Activated CD4-positive, alpha-beta memory T cell treated with anti-CD3 and anti-CD28 coated beads, Interleukin-2, amount 10 ng/mL, durations not matched to agents 7 days and 5 days (primary cell): ENCODE measurements at regions of chr17 and their contacts with region 1.

Region 1: GRCh38 chr17:72556944-72557826 is 436.4 kb downstream of the SOX9 start:
- DNase-seq: peak; percentile 77
- H3K4me3 Mint-ChIP-seq: no peak overlapping the region
- H3K27ac Mint-ChIP-seq: no peak overlapping the region
- H3K4me1 Mint-ChIP-seq: peaks cover 4% of the 10 kb centered on the region
- H3K27me3 Mint-ChIP-seq: no peaks in the 10 kb centered on the region

Region 2: DNA sequence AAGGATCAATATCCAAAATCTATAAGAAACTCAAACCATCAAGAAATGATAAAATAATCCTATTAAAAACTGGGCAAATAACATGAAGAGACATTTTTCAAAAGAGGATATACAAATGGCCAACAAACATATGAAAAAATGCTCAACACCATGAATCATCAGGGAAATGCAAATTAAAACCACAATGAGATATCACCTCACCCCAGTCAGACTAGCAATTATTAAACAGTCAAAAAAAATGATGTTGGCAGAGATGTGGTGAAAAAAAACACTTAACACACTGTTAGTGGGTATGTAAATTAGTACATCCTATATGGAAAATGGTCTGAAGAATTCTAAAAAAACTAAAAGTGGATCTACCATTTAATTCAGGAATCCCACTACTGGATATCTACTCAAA is 815.3 kb before region 1 on chr17:
- CTCF ChIA-PET with region 1: no interaction called
- POLR2A ChIA-PET with region 1: no interaction called
- DNase-seq: no peak
- H3K4me3 Mint-ChIP-seq: no peak overlapping the region
- H3K27ac Mint-ChIP-seq: no peak overlapping the region
- H3K4me1 Mint-ChIP-seq: no peaks in the 10 kb centered on the region
- H3K27me3 Mint-ChIP-seq: no peaks in the 10 kb centered on the region

Region 3: GRCh38 chr17:72592242-72592966 is 35.2 kb after region 1 on chr17:
- CTCF ChIA-PET with region 1: interaction called, 19 read pairs
- POLR2A ChIA-PET with region 1: interaction called, 7 read pairs
- DNase-seq: peak; percentile 85
- H3K4me3 Mint-ChIP-seq: peak overlapping the region; percentile 92
- H3K27ac Mint-ChIP-seq: peak overlapping the region; percentile 50
- H3K4me1 Mint-ChIP-seq: peaks cover 43% of the 10 kb centered on the region
- H3K27me3 Mint-ChIP-seq: peaks cover 43% of the 10 kb centered on the region

Region 4: GRCh38 chr17:72985881-72986720 is 428.9 kb after region 1 on chr17:
- CTCF ChIA-PET with region 1: interaction called, 17 read pairs
- POLR2A ChIA-PET with region 1: no interaction called
- DNase-seq: peak; percentile 62
- H3K4me3 Mint-ChIP-seq: no peak overlapping the region
- H3K27ac Mint-ChIP-seq: no peak overlapping the region
- H3K4me1 Mint-ChIP-seq: peaks cover 1% of the 10 kb centered on the region
- H3K27me3 Mint-ChIP-seq: no peaks in the 10 kb centered on the region

Region 5: DNA sequence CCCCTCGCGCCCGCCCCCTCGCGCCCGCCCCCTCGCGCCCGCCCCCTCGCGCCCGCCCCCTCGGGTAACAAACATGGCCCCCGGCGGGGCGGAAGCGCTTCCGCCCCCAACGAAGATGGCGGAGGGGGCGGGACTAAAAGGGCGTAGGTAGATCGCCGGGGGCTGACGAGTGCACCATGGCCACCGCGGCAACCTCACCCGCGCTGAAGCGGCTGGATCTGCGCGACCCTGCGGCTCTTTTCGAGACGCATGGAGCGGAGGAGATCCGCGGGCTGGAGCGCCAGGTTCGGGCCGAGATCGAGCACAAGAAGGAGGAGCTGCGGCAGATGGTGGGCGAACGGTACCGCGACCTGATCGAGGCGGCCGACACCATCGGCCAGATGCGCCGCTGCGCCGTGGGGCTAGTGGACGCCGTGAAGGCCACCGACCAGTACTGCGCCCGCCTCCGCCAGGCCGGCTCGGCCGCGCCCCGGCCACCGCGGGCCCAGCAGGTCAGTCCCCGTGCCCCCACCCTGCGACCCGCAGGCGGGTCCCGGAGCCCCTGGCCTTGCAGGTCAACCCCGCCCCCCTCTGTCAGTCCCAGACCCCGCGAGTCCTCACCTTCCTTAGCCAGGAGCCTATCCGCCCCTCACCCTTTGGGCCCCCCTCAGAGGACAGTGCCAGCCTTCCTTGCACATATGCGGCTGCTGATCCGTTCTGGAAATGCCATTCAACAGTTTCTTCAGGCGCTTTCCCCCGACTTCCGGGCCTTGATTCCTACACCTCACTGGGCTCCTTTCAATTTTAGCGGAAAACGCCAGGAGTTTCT is 635.9 kb after region 1 on chr17 and contains the start of gene COG1:
- CTCF ChIA-PET with region 1: interaction called, 17 read pairs
- POLR2A ChIA-PET with region 1: no interaction called
- DNase-seq: peak; percentile 92
- H3K4me3 Mint-ChIP-seq: peak within 1 kb of the TSS; percentile 95
- H3K27ac Mint-ChIP-seq: peak within 1 kb of the TSS; percentile 94
- H3K4me1 Mint-ChIP-seq: peaks cover 38% of the 10 kb centered on the region
- H3K27me3 Mint-ChIP-seq: no peaks in the 10 kb centered on the region
- total RNA-seq, gene COG1: 30.4 to 32.9 TPM